MCF 10A (cell line): ENCODE measurements at regions of chr15 and their contacts with region 1.

Region 1: GRCh38 chr15:64426845-64427465 is 33.4 kb upstream of the ZNF609 start:
- DNase-seq: peak; percentile 35
- H3K4me3 Mint-ChIP-seq: no peak overlapping the region
- H3K27ac Mint-ChIP-seq: no peak overlapping the region
- H3K4me1 Mint-ChIP-seq: peaks cover 7% of the 10 kb centered on the region
- H3K27me3 Mint-ChIP-seq: no peaks in the 10 kb centered on the region
- CTCF ChIP-seq: peak; percentile 39

Region 2: DNA sequence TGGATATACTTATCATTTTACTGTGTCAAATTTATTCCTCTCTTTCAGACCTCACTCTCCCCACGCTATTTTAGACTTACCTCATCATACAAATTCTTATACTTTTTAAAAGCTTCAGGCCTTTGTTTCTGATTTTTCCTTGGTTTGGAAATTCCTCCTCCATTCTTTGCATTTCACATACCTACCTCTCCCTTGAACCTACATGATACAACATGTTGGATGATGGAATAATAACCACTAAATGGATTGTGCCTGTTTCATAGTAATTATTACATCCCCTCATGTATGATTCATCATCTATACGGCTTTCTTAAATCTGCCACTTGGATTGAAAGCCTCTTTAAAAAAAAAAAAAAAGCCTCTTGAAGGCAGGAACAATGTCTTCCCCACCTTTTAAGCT is 14.7 kb before region 1 on chr15:
- CTCF ChIA-PET with region 1: interaction called, 13 read pairs
- POLR2A ChIA-PET with region 1: no interaction called
- intact Hi-C with region 1: no loop called
- DNase-seq: peak; percentile 40
- H3K4me3 Mint-ChIP-seq: no peak overlapping the region
- H3K27ac Mint-ChIP-seq: peak overlapping the region; percentile 91
- H3K4me1 Mint-ChIP-seq: peaks cover 7% of the 10 kb centered on the region
- H3K27me3 Mint-ChIP-seq: no peaks in the 10 kb centered on the region
- CTCF ChIP-seq: no peak